Activated CD4-positive, alpha-beta memory T cell treated with anti-CD3 and anti-CD28 coated beads for 36 hours (primary cell): ENCODE measurements at regions of chr5 and their contacts with region 1.

Region 1: GRCh38 chr5:141992349-141992963 is 20.4 kb downstream of the GNPDA1 start:
- DNase-seq: peak; percentile 84
- H3K4me3 Mint-ChIP-seq: no peak overlapping the region
- H3K27ac Mint-ChIP-seq: no peak overlapping the region
- H3K4me1 Mint-ChIP-seq: no peaks in the 10 kb centered on the region
- H3K27me3 Mint-ChIP-seq: no peaks in the 10 kb centered on the region

Region 2: DNA sequence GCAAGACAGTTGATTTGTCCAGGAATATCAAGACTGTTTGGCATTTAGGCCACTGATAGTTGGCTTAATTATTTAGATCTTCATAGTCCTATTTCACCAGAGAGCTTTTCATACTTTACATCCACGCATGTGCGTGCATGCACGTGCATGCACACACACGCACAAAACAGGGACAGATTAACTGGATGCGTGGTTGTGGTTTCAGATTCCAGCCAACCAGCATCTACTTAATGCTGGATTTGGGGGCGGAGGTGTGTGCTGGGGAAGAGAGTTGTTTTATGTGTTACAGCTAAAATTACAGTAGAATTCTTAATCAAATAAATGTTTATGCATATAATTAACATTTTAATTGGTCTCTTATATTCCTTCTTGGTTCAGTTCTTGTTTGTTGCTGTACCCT is 16.3 kb before region 1 on chr5:
- CTCF ChIA-PET with region 1: interaction called, 27 read pairs
- POLR2A ChIA-PET with region 1: no interaction called
- intact Hi-C with region 1: no loop called
- DNase-seq: no peak
- H3K4me3 Mint-ChIP-seq: no peak overlapping the region
- H3K27ac Mint-ChIP-seq: no peak overlapping the region
- H3K4me1 Mint-ChIP-seq: peaks cover 22% of the 10 kb centered on the region
- H3K27me3 Mint-ChIP-seq: no peaks in the 10 kb centered on the region

Region 3: GRCh38 chr5:142145106-142145900 is 152.8 kb after region 1 on chr5:
- CTCF ChIA-PET with region 1: interaction called, 178 read pairs
- POLR2A ChIA-PET with region 1: interaction called, 7 read pairs
- intact Hi-C with region 1: loop called (anchors 1 kb)
- DNase-seq: peak; percentile 67
- H3K4me3 Mint-ChIP-seq: no peak overlapping the region
- H3K27ac Mint-ChIP-seq: no peak overlapping the region
- H3K4me1 Mint-ChIP-seq: peaks cover 2% of the 10 kb centered on the region
- H3K27me3 Mint-ChIP-seq: no peaks in the 10 kb centered on the region

Region 4: DNA sequence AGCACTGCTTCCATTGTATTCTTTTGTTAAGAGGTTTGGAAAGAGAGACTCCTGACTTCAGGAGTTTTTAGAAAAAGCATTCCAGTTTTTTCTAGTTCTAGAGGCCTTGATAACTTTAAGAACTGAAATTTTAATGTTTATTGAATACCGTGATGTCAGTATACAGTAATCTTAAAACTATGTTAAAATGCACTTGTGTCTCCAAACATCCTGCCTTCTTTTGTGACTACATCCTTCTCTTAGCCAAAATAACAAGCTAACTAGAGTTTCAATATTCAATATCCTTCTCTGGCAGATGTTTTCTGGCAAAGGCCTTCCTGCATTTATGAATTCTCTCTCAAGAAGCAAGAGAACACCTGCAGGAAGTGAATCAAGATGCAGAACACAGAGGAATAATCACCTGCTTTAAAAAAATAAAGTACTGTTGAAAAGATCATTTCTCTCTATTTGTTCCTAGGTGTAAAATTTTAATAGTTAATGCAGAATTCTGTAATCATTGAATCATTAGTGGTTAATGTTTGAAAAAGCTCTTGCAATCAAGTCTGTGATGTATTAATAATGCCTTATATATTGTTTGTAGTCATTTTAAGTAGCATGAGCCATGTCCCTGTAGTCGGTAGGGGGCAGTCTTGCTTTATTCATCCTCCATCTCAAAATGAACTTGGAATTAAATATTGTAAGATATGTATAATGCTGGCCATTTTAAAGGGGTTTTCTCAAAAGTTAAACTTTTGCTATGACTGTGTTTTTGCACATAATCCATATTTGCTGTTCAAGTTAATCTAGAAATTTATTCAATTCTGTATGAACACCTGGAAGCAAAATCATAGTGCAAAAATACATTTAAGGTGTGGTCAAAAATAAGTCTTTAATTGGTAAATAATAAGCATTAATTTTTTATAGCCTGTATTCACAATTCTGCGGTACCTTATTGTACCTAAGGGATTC is 159.3 kb after region 1 on chr5:
- CTCF ChIA-PET with region 1: interaction called, 178 read pairs
- POLR2A ChIA-PET with region 1: no interaction called
- intact Hi-C with region 1: no loop called
- DNase-seq: peak; percentile 56
- H3K4me3 Mint-ChIP-seq: no peak overlapping the region
- H3K27ac Mint-ChIP-seq: no peak overlapping the region
- H3K4me1 Mint-ChIP-seq: peaks cover 7% of the 10 kb centered on the region
- H3K27me3 Mint-ChIP-seq: no peaks in the 10 kb centered on the region

Region 5: DNA sequence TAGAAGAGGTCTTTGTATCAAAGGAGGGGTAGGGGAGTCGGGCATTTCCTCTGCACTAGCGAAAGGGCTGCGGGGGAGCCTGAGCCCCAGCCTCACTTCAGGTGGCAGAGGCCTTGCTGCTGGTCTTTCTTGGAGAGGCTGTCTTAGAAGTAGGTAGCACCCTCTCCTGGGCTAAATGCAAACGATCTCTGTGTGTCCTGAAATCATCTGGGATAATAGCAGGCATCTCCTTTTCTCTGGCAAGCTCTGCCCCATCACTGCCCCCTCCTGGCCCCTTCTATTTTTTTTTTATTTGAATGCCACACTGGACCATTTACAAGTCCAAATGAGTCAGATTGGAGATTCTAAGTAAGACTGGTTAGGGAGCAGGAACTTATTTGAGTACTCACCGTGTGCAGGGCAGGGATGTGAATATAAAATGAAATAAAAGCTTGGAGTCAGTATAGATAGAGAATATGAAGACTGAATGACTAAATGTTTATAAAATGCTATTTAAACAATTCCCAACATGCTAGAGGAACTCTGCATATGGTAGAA is 556.4 kb after region 1 on chr5:
- CTCF ChIA-PET with region 1: no interaction called
- POLR2A ChIA-PET with region 1: no interaction called
- intact Hi-C with region 1: loop called (anchors 5 kb)
- DNase-seq: peak; percentile 45
- H3K4me3 Mint-ChIP-seq: no peak overlapping the region
- H3K27ac Mint-ChIP-seq: no peak overlapping the region
- H3K4me1 Mint-ChIP-seq: peaks cover 18% of the 10 kb centered on the region
- H3K27me3 Mint-ChIP-seq: peaks cover 8% of the 10 kb centered on the region